Upper lobe of right lung (tissue), 1 donor: ENCODE measurements at regions of chr5 and their contacts with region 1.

Region 1: DNA sequence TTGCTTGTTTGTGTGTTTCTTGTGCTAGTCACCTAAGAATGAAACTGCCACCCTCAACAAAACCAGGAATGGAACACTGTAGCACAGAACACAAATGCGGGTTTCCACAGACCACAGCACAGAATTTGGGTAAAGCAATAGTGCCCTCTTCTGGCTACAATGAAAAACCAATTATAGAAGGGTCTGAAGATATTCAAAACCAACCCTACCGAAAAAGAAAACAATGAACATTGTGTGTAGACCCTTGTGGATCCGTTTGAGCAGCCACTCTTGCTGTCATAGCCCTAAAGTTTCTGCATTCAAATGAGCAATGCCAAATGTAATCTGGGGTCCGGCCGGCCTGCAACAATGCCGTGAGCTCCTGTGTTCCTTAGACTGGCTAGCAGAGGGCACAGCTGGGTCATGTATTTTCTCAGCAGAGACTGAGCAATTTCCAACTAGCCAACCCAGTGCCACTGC is 8.3 kb upstream of the ENC1 start:
- DNase-seq: no peak
- ATAC-seq: peak; percentile 94
- H3K4me3 ChIP-seq: no peak overlapping the region
- H3K27ac ChIP-seq: no peak overlapping the region
- H3K4me1 ChIP-seq: peaks cover 4% of the 10 kb centered on the region
- H3K27me3 ChIP-seq: no peaks in the 10 kb centered on the region
- CTCF ChIP-seq: peak; percentile 81

Region 2: GRCh38 chr5:73902327-73903051 is 746.4 kb before region 1 on chr5:
- intact Hi-C with region 1: loop called (anchors 5 kb)
- DNase-seq: no peak
- ATAC-seq: peak; percentile 78
- H3K4me3 ChIP-seq: no peak overlapping the region
- H3K27ac ChIP-seq: no peak overlapping the region
- H3K4me1 ChIP-seq: peaks cover 9% of the 10 kb centered on the region
- H3K27me3 ChIP-seq: no peaks in the 10 kb centered on the region
- CTCF ChIP-seq: peak; percentile 88

Region 3: GRCh38 chr5:74382987-74383593 is 265.8 kb before region 1 on chr5:
- intact Hi-C with region 1: no loop called
- DNase-seq: no peak
- ATAC-seq: no peak
- H3K4me3 ChIP-seq: no peak overlapping the region
- H3K27ac ChIP-seq: no peak overlapping the region
- H3K4me1 ChIP-seq: peaks cover 13% of the 10 kb centered on the region
- H3K27me3 ChIP-seq: no peaks in the 10 kb centered on the region
- CTCF ChIP-seq: no peak